Activated naive CD4-positive, alpha-beta T cell treated with anti-CD3 and anti-CD28 coated beads for 36 hours (primary cell): ENCODE measurements at regions of chr3 and their contacts with region 1.

Region 1: DNA sequence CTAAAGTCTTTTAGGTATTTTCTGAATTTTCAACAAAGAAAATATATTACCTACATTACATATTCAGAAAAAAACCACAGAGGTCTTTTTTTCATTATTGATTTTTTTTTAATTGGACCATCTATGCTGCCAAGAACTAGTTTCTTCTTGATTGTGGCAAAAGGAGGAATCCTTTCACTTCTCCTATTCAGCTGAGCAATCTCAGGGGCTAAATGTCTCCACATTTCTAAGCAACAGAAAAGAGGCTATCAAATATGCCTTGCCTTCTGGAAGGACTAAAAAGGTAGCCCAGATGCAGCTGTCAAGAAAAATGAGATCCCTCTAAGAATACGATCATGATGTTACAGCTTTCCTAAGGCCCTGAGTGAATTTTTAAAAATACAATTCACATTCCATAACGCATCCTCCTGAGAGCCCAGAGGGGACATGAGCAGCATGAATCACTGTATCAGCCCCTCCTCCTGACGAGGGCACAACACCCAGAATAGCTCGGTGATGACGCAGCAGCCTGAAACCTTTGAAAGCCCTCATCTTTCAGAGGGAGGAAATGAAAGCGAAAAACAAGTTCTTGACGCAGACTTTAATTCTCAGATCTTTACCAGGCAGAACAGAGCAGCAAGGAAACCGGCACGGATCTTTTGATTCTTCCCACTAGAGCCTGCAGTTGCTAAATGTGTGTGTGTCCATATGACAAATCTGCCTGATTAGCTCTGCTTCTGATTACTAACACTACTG is 24.6 kb downstream of the RUBCN start:
- DNase-seq: peak; percentile 96
- H3K4me3 Mint-ChIP-seq: peak overlapping the region; percentile 40
- H3K27ac Mint-ChIP-seq: peak overlapping the region; percentile 85
- H3K4me1 Mint-ChIP-seq: peaks cover 35% of the 10 kb centered on the region
- H3K27me3 Mint-ChIP-seq: no peaks in the 10 kb centered on the region

Region 2: GRCh38 chr3:197736491-197737318 is 24.6 kb after region 1 on chr3 and contains the start of gene RUBCN:
- CTCF ChIA-PET with region 1: interaction called, 3 read pairs
- intact Hi-C with region 1: loop called (anchors 1 kb)
- DNase-seq: peak; percentile 96
- H3K4me3 Mint-ChIP-seq: peak within 1 kb of the TSS; percentile 92
- H3K27ac Mint-ChIP-seq: peak within 1 kb of the TSS; percentile 92
- H3K4me1 Mint-ChIP-seq: peaks cover 35% of the 10 kb centered on the region
- H3K27me3 Mint-ChIP-seq: no peaks in the 10 kb centered on the region
- total RNA-seq, gene RUBCN: 20.8 to 22.0 TPM

Region 3: DNA sequence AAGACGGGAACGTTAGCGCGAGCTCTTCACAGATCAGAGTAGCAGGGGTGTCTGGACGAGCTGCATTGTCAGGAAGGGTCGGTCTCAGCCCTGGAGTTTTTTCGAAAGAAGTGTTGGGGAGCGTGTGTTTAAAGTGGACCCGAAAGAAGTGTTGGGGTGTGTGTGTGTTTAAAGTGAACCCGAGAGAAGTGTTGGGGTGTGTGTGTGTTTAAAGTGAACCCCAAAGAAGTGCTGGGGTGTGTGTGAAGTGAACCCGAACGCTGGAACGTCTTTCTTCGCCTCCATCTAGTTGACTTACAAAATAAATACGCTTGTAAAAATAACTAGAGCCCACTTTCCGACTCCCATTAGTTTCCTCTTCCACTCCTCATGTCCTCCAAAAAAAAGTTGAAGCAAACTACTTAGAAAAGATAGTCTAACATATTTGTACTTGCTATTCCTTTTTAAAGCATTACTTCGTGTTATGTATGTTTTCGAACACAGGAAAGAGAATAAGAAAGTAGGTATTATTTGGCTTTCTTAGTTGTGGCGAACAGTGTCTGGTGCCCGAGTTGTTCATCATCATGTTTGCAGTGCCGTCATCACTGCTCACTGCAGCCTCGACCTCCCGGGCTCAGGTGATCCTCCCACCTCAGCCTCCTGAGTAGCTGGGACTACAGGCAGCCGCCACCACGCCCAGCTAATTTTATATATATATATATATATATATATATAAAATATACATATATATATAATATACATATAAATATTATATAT is 79.9 kb after region 1 on chr3:
- CTCF ChIA-PET with region 1: interaction called, 4 read pairs
- intact Hi-C with region 1: loop called (anchors 1 kb)
- DNase-seq: peak; percentile 63
- H3K4me3 Mint-ChIP-seq: peak overlapping the region; percentile 81
- H3K27ac Mint-ChIP-seq: peak overlapping the region; percentile 92
- H3K4me1 Mint-ChIP-seq: peaks cover 45% of the 10 kb centered on the region
- H3K27me3 Mint-ChIP-seq: no peaks in the 10 kb centered on the region

Region 4: GRCh38 chr3:197906023-197906849 is 194.1 kb after region 1 on chr3:
- CTCF ChIA-PET with region 1: no interaction called
- intact Hi-C with region 1: loop called (anchors 1 kb)
- DNase-seq: peak; percentile 91
- H3K4me3 Mint-ChIP-seq: no peak overlapping the region
- H3K27ac Mint-ChIP-seq: peak overlapping the region; percentile 85
- H3K4me1 Mint-ChIP-seq: peaks cover 24% of the 10 kb centered on the region
- H3K27me3 Mint-ChIP-seq: no peaks in the 10 kb centered on the region

Region 5: DNA sequence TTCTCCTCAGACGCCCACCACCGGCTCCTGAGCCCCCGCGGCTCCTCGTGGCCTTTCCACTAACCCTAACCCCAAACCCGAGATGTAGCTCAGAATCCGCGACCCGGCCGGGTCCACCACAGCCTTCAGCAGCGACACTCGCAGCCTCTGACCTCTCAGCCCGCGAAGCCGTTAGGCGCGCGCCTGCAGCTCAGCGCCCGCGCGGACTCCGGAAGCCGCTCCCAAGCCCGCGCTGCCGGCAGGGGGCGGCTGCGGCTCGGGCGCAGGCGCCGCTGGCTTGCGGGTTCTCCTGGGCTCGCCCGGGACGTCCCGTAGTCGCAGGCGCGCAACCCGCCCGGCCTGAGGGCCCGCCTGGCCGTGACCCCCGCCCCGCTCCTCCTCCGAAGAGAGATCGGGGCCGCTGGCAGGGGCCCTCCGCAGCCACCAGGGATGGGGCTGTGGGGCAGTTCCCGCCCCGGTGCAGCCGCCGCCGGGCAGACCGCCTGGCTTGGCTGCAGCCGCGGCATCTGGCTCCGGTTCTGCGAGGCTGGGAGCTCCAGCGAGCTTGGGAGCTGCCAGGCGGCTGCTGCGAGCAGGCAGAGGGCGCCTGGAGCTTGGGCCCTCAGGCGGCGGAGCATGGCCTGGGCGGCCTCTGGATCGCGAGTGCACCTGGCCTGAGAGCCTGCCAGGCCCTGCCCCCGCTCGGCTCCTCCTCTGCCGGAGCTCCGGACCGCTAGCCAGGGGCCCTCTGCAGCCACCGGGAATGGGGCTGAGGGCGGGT is 368.6 kb after region 1 on chr3:
- CTCF ChIA-PET with region 1: no interaction called
- intact Hi-C with region 1: loop called (anchors 10 kb)
- DNase-seq: peak; percentile 81
- H3K4me3 Mint-ChIP-seq: peak overlapping the region; percentile 88
- H3K27ac Mint-ChIP-seq: peak overlapping the region; percentile 86
- H3K4me1 Mint-ChIP-seq: peaks cover 19% of the 10 kb centered on the region
- H3K27me3 Mint-ChIP-seq: peaks cover 37% of the 10 kb centered on the region